Ascending aorta (tissue), 2 donors: ENCODE measurements at regions of chr14 and their contacts with region 1.

Region 1: GRCh38 chr14:94173885-94174603 is at the start of gene PPP4R4:
- DNase-seq: peak; percentile 63 to 92
- H3K4me3 ChIP-seq: peak within 1 kb of the TSS; percentile 75 to 84
- H3K27ac ChIP-seq: peak within 1 kb of the TSS; percentile 50 to 61
- H3K4me1 ChIP-seq: peaks cover 3 to 14% of the 10 kb centered on the region in 2 donors
- H3K27me3 ChIP-seq: no peaks in the 10 kb centered on the region
- CTCF ChIP-seq: no peak
- total RNA-seq, gene PPP4R4: not detected

Region 2: DNA sequence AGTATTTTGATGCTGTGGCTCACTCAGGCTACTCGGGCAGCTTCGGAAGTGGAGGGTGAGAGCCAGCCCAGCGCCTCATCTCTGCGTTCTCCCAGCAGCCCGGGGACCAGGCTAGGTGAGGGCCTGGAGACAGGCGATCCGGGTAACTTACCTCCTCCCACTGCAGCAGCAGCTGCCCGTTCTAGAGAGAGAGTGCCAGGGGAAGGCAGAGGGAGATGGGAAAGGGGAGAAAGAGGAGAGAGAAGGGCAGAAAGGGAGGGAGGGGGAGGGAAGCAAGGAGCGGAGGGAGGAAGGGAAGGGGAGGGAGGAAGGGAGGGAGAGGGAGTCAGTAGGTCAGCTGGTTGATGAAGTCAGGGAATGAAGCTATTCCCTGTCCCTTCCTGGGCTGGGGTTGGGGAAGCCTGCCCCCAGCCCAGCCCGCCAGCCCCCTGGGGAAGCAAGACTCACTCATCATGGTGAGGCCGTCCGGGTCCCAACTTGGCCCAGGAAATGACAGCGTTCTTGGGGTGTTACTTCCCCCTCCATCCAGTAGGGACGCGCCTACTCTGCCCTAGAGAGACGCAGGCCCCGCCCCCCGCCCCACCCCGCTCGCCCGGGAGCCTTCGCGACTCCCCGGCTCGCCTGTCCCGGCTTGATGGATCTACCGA is 44.8 kb before region 1 on chr14 and contains the start of gene IFI27L2:
- intact Hi-C with region 1: loop called (anchors 2 kb)
- DNase-seq: peak; percentile 57 to 87
- H3K4me3 ChIP-seq: peak within 1 kb of the TSS; percentile 67 to 70
- H3K27ac ChIP-seq: peak within 1 kb of the TSS; percentile 74 to 88
- H3K4me1 ChIP-seq: peaks cover 0 to 5% of the 10 kb centered on the region in 2 donors
- H3K27me3 ChIP-seq: no peaks in the 10 kb centered on the region
- CTCF ChIP-seq: peak in 2 of 3 experiments; percentile 31 to 39
- total RNA-seq, gene IFI27L2: 36.0 TPM